Activated T-helper 2 cell treated with anti-CD3 and anti-CD28 coated beads, Interferon-gamma antibody, Interleukin-2, Interleukin-4, amounts not matched to agents 10 μg/mL and 5 μg/mL and 100 μg/mL, durations not matched to agents 14 hours and 24 hours and 36 hours (primary cell): ENCODE measurements at regions of chr11 and their contacts with region 1.

Region 1: GRCh38 chr11:72752088-72752914 is at the start of gene ARAP1:
- DNase-seq: peak; percentile 62
- H3K4me3 Mint-ChIP-seq: peak within 1 kb of the TSS; percentile 96
- H3K27ac Mint-ChIP-seq: peak within 1 kb of the TSS; percentile 97
- H3K4me1 Mint-ChIP-seq: peaks cover 20% of the 10 kb centered on the region
- H3K27me3 Mint-ChIP-seq: no peaks in the 10 kb centered on the region
- total RNA-seq, gene ARAP1: 95.2 and 96.2 TPM in 2 replicates

Region 2: GRCh38 chr11:72736452-72737069 is 15.7 kb before region 1 on chr11:
- intact Hi-C with region 1: loop called (anchors 1 kb)
- DNase-seq: peak; percentile 54
- H3K4me3 Mint-ChIP-seq: peak overlapping the region; percentile 49
- H3K27ac Mint-ChIP-seq: peak overlapping the region; percentile 95
- H3K4me1 Mint-ChIP-seq: peaks cover 45% of the 10 kb centered on the region
- H3K27me3 Mint-ChIP-seq: no peaks in the 10 kb centered on the region

Region 3: GRCh38 chr11:72821883-72822799 is 69.8 kb after region 1 on chr11:
- intact Hi-C with region 1: no loop called
- DNase-seq: peak; percentile 58
- H3K4me3 Mint-ChIP-seq: no peak overlapping the region
- H3K27ac Mint-ChIP-seq: no peak overlapping the region
- H3K4me1 Mint-ChIP-seq: peaks cover 10% of the 10 kb centered on the region
- H3K27me3 Mint-ChIP-seq: no peaks in the 10 kb centered on the region